Activated B cell treated with CpG ODN at 0.5 μM for 24 hours (primary cell): ENCODE measurements at regions of chr10 and their contacts with region 1.

Region 1: GRCh38 chr10:48306265-48306869 is at the start of gene MAPK8:
- DNase-seq: peak; percentile 93
- ATAC-seq: peak; percentile 92
- H3K4me3 Mint-ChIP-seq: peak within 1 kb of the TSS; percentile 78
- H3K27ac Mint-ChIP-seq: peak within 1 kb of the TSS; percentile 47
- H3K4me1 Mint-ChIP-seq: peaks cover 33% of the 10 kb centered on the region
- H3K27me3 Mint-ChIP-seq: no peaks in the 10 kb centered on the region
- CTCF ChIP-seq: no peak
- total RNA-seq, gene MAPK8: 25.8 and 25.9 TPM in 2 replicates

Region 2: GRCh38 chr10:47384148-47384921 is 922.0 kb before region 1 on chr10 and contains the start of gene ZNF488:
- CTCF ChIA-PET with region 1: no interaction called
- POLR2A ChIA-PET with region 1: no interaction called
- intact Hi-C with region 1: loop called (anchors 10 kb)
- DNase-seq: peak; percentile 66
- ATAC-seq: peak; percentile 95
- H3K4me3 Mint-ChIP-seq: peak within 1 kb of the TSS; percentile 88
- H3K27ac Mint-ChIP-seq: no peak within 1 kb of the TSS
- H3K4me1 Mint-ChIP-seq: peaks cover 12% of the 10 kb centered on the region
- H3K27me3 Mint-ChIP-seq: peaks cover 51% of the 10 kb centered on the region
- CTCF ChIP-seq: no peak
- total RNA-seq, gene ZNF488: not detected in 2 replicates

Region 3: DNA sequence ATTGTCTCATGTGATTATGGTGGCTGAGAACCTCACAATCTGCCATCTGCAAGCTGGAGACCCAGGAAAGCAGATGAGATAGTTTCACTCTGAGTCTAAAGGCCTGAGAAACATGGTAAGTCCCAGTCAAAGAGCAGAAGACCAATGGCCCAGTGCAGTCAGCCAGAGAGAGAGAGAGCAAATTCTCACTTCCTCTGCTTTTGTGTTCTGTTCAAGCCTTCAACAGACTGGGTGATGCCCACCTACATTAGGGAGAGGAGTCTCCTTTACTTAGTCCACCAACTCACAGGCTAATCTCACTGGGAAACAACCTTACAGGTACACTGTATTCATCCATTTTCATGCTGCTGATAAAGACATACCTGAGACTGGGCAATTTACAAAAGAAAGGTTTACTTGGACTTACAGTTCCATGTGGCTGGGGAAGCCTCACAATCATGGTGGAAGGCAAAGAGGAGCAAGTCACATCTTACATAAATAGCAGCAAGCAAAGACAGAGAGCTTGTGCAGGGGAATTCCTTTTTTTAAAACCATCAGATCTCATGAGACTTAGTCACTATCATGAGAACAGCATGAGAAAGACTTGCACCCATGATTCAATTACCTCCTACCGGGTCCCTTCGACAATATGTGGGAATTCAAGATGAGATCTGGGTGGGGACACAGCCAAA is 27.2 kb before region 1 on chr10:
- CTCF ChIA-PET with region 1: no interaction called
- POLR2A ChIA-PET with region 1: interaction called, 3 read pairs
- intact Hi-C with region 1: loop called (anchors 1 kb)
- DNase-seq: no peak
- ATAC-seq: peak; percentile 91
- H3K4me3 Mint-ChIP-seq: peak overlapping the region; percentile 46
- H3K27ac Mint-ChIP-seq: peak overlapping the region; percentile 89
- H3K4me1 Mint-ChIP-seq: peaks cover 34% of the 10 kb centered on the region
- H3K27me3 Mint-ChIP-seq: no peaks in the 10 kb centered on the region
- CTCF ChIP-seq: no peak

Region 4: DNA sequence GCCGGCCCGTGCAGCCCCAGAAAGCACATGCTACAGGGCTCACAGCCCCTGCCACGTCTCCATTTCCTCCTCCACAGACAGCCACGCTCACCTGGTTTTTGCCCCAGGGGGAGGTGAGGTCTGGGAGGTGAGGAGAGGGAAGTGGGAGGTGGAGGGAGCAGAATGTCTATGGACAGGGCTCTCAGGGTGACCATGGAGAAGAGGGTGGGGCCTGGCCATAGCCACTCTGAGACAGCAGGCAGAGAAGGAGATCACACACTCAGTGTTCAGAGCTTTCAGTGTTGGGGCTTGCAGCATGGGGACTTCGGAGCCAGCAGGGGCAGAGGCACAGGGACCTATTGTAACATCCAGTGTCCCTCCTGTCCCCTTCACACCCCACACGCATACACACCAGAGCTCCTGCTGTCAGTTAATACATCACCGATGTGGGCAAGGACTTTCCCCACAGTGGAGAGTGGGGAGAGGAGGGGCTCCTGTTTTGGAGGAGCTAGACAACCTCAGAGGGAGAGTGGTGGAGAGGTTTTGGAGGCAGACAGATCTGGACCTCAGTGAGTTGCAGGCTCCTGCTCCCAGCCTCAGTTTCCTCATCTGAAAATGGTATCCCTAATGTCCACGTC is 392.8 kb after region 1 on chr10:
- CTCF ChIA-PET with region 1: no interaction called
- POLR2A ChIA-PET with region 1: no interaction called
- intact Hi-C with region 1: no loop called
- DNase-seq: no peak
- ATAC-seq: no peak
- H3K4me3 Mint-ChIP-seq: peak overlapping the region; percentile 28
- H3K27ac Mint-ChIP-seq: peak overlapping the region; percentile 80
- H3K4me1 Mint-ChIP-seq: peaks cover 98% of the 10 kb centered on the region
- H3K27me3 Mint-ChIP-seq: no peaks in the 10 kb centered on the region
- CTCF ChIP-seq: no peak

Region 5: GRCh38 chr10:49187950-49188761 is 881.8 kb after region 1 on chr10 and contains the start of gene TMEM273:
- CTCF ChIA-PET with region 1: no interaction called
- POLR2A ChIA-PET with region 1: no interaction called
- intact Hi-C with region 1: loop called (anchors 5 kb)
- DNase-seq: no peak
- ATAC-seq: peak; percentile 75
- H3K4me3 Mint-ChIP-seq: peak within 1 kb of the TSS; percentile 82
- H3K27ac Mint-ChIP-seq: peak within 1 kb of the TSS; percentile 93
- H3K4me1 Mint-ChIP-seq: peaks cover 81% of the 10 kb centered on the region
- H3K27me3 Mint-ChIP-seq: no peaks in the 10 kb centered on the region
- CTCF ChIP-seq: no peak
- total RNA-seq, gene TMEM273: 6.7 and 8.5 TPM in 2 replicates